ENCODE measurements at regions of chr1 and their contacts with region 1.

Region 1: DNA sequence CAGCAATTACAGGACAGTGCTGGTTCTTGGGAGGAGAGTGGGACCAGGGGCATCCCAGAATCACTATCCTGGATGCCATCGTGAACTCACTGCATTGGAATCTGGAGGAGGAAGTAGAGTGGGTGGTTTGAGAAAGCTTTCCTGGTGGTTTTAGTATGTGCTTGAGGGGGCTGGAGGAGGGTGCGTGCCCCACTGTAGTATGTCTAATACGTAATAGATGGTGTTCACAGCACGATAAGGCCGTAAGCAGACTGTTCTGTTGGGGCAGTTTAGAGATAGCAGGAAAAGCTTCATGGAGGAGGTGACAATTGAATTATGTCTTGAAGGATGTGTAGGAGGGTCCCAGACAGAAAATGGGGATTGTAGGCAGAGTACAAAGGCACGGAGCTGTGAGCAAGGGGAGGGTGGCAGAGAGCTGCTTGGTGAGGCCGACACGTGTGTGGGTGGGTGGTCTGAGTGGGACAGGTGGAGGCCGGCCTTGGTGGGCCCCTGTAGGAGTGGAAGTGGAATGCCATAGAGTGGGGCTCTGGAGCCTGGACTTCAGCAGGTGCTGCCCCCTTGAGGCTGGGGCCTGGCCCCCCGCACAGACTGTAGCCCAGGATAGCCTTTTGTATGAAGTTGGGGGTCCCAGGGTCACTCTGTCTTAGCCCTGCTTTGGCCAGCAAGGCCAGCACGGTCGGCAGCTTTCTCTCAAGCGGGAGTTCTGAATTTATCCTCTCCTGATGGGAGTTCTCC is 37.0 kb downstream of the IL6R start:
- DNase-seq: peak in 1 of 3 donors; percentile 23
- H3K4me3 ChIP-seq: no peak overlapping the region
- H3K27ac ChIP-seq: no peak overlapping the region
- H3K4me1 ChIP-seq: peaks cover 0 to 20% (median 15%) of the 10 kb centered on the region in 4 experiments
- H3K27me3 ChIP-seq: peaks cover 0 to 2% (median 0%) of the 10 kb centered on the region in 5 experiments

Region 2: GRCh38 chr1:154404984-154405761 is 37.0 kb before region 1 on chr1 and contains the start of gene IL6R:
- CTCF ChIA-PET with region 1: interaction called, 12 read pairs
- POLR2A ChIA-PET with region 1: no interaction called
- DNase-seq: peak; percentile 96 to 97 (median 96)
- H3K4me3 ChIP-seq: peak within 1 kb of the TSS; percentile 27 to 89 (median 71)
- H3K27ac ChIP-seq: peak within 1 kb of the TSS; percentile 42 to 80
- H3K4me1 ChIP-seq: peaks cover 20 to 90% (median 85%) of the 10 kb centered on the region in 4 experiments
- H3K27me3 ChIP-seq: no peaks in the 10 kb centered on the region

Region 3: DNA sequence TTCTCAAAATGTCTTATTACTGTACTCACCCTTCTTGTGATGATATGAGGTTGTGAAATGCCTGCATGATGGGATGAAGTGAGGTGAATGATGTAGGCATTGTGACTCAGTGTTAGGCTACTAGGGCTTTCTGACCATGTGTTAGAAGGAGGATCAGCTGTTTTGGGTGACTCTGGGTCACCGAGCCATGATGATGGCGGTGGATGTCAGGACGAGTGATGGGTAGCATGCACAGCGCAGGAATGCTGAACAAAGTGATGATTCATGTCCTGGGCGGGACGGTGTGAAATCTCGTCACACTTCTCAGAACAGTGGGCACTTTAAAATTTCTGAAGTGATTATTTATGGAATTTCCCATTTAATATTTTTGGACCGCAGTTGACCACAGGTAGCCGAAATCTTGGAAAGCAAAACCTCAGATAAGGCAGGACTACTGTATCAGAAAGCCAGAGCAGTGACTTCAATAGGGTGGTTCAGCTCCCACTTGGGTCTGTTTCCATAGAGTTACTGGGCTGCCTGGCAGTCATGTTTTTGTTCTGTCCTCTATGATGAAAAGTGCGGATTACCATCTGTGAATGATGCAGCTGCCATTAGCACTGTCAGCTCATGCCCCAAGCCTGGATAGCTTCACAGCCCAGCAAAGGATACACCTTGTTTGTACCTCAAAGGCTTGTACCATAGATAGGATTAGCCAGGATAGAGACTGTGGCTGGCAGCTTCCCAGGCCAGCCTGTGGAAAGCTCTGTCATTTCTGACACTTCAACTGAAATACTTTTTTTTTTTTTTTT is 10.4 kb before region 1 on chr1:
- CTCF ChIA-PET with region 1: interaction called, 11 read pairs
- POLR2A ChIA-PET with region 1: no interaction called
- DNase-seq: peak in 2 of 3 donors; percentile 14 to 39
- H3K4me3 ChIP-seq: no peak overlapping the region
- H3K27ac ChIP-seq: no peak overlapping the region
- H3K4me1 ChIP-seq: peaks cover 0 to 16% (median 4%) of the 10 kb centered on the region in 4 experiments
- H3K27me3 ChIP-seq: no peaks in the 10 kb centered on the region

Region 4: GRCh38 chr1:154453574-154454352 is 11.6 kb after region 1 on chr1:
- CTCF ChIA-PET with region 1: interaction called, 16 read pairs
- POLR2A ChIA-PET with region 1: no interaction called
- DNase-seq: no peak
- H3K4me3 ChIP-seq: no peak overlapping the region
- H3K27ac ChIP-seq: no peak overlapping the region
- H3K4me1 ChIP-seq: peaks cover 0 to 11% (median 7%) of the 10 kb centered on the region in 4 experiments
- H3K27me3 ChIP-seq: no peaks in the 10 kb centered on the region

Region 5: DNA sequence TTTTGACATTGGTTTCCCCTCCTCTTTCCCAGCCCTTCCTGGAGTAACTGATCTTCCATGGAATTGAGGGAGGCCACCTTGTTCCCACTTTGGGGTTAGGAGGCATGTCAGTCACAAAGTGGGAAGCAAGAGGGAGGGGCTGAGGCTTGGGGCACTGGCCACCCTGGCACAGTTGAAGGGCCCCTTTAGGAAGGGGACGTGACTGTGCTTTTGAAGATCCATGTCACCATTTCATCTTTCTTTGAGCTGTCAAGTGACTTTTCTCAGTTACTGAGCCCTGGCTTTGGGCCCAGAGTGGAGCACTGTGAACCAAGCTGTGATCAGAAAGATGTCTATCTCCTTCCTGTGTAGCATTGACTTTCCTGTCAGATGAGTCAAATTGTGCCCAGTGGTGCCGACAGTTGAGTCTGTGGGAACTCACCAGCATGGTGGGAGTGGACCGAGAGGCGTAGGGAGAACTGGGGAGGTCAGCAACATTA is 21.4 kb after region 1 on chr1:
- CTCF ChIA-PET with region 1: interaction called, 11 read pairs
- POLR2A ChIA-PET with region 1: no interaction called
- DNase-seq: peak in 2 of 3 donors; percentile 78 to 80
- H3K4me3 ChIP-seq: peak overlapping the region in 5 of 7 experiments; percentile 0 to 59 (median 36)
- H3K27ac ChIP-seq: peak overlapping the region; percentile 43 to 69
- H3K4me1 ChIP-seq: peaks cover 8 to 61% (median 50%) of the 10 kb centered on the region in 4 experiments
- H3K27me3 ChIP-seq: no peaks in the 10 kb centered on the region